Head of caudate nucleus (tissue), 42 donors: ENCODE measurements at regions of chr20 and their contacts with region 1.

Region 1: GRCh38 chr20:20410678-20411077 is 42.8 kb downstream of the INSM1 start:
- DNase-seq: peak; percentile 38 to 90 (median 70)

Region 2: DNA sequence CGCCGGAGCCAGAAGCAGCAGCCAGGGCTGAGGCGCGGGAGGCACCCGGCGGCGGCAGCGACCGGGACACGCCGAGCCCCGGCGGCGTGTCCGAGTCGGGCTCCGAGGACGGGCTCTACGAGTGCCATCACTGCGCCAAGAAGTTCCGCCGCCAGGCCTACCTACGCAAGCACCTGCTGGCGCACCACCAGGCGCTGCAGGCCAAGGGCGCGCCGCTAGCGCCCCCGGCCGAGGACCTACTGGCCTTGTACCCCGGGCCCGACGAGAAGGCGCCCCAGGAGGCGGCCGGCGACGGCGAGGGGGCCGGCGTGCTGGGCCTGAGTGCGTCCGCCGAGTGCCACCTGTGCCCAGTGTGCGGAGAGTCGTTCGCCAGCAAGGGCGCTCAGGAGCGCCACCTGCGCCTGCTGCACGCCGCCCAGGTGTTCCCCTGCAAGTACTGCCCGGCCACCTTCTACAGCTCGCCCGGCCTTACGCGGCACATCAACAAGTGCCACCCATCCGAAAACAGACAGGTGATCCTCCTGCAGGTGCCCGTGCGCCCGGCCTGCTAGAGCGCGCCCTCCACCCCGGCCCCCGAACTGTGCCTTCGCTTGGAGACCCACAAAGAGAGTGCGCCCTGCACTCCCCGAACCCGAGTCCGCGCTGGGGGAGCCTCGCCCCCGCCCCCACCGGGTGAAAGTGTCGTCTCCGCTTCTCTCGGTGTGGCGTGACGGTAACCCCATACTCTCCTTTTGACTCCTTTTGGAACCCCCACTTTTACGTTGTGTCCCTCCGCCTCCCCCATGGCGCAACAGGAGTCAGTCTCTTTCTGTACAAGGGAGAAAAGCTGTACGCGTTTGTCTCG is 41.2 kb before region 1 on chr20:
- intact Hi-C with region 1: loop called (anchors 2 kb)
- DNase-seq: peak in 37 of 42 donors; percentile 23 to 79 (median 56)